Sigmoid colon (tissue), 7 donors: ENCODE measurements at regions of chr14 and their contacts with region 1.

Region 1: GRCh38 chr14:20613094-20614037 is 22.2 kb upstream of the RNASE12 start:
- DNase-seq: peak; percentile 93
- H3K4me3 ChIP-seq: peak overlapping the region; percentile 38 to 56 (median 52)
- H3K27ac ChIP-seq: peak overlapping the region; percentile 73 to 86 (median 78)
- H3K4me1 ChIP-seq: peaks cover 3 to 21% (median 13%) of the 10 kb centered on the region in 4 donors
- H3K27me3 ChIP-seq: no peaks in the 10 kb centered on the region
- CTCF ChIP-seq: peak; percentile 77 to 98 (median 94)
- EP300 ChIP-seq: no peak
- POLR2A ChIP-seq: no peak

Region 2: GRCh38 chr14:20327005-20327869 is 286.1 kb before region 1 on chr14:
- intact Hi-C with region 1: loop called (anchors 2 kb)
- DNase-seq: no peak
- H3K4me3 ChIP-seq: no peak overlapping the region
- H3K27ac ChIP-seq: peak overlapping the region; percentile 15 to 62 (median 40)
- H3K4me1 ChIP-seq: peaks cover 0 to 29% (median 15%) of the 10 kb centered on the region in 4 donors
- H3K27me3 ChIP-seq: no peaks in the 10 kb centered on the region
- CTCF ChIP-seq: peak; percentile 31 to 71 (median 55)
- EP300 ChIP-seq: no peak
- POLR2A ChIP-seq: no peak

Region 3: GRCh38 chr14:20413045-20413799 is 200.1 kb before region 1 on chr14 and contains the start of gene TEP1:
- intact Hi-C with region 1: loop called (anchors 2 kb)
- DNase-seq: peak; percentile 95
- H3K4me3 ChIP-seq: peak within 1 kb of the TSS; percentile 64 to 87 (median 77)
- H3K27ac ChIP-seq: peak within 1 kb of the TSS; percentile 94 to 96 (median 96)
- H3K4me1 ChIP-seq: peaks cover 0 to 19% (median 13%) of the 10 kb centered on the region in 4 donors
- H3K27me3 ChIP-seq: no peaks in the 10 kb centered on the region
- CTCF ChIP-seq: no peak
- EP300 ChIP-seq: no peak
- POLR2A ChIP-seq: peak; percentile 50 to 64
- total RNA-seq, gene TEP1: 12.7 to 42.7 (median 19.6) TPM

Region 4: DNA sequence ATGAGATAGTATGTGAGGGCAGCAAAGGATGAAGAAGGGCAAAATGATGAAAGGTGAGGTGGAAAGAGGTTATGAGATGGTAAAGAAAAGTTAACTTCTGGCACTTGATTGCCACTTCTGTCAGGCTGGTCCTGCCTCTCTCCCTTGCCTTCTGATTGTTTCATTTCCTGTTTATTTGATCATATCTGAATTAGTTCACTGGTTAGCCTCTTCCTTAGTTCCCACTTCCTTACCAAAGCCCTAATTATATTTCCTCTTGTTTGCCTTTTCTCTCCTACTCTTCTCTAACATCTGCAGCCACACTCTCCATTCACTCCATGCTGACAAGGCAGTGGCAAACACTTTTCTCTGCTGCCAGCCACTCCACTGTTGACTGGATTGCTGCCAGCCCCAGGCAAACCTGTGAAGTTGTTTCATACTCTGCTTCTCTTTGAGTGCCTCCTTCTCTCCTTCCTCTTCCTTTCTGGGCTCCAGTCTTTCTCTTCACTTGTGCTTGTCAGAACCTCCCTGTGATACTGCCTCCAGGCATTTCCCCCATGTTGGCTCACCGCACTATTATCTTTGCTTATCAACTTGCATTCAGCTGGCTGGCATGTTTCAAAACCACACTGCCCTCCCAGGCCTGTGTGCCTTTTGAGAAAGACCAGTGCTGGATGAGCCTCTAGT is 136.0 kb before region 1 on chr14:
- intact Hi-C with region 1: no loop called
- DNase-seq: no peak
- H3K4me3 ChIP-seq: no peak overlapping the region
- H3K27ac ChIP-seq: peak overlapping the region in 3 of 4 donors; percentile 29 to 44 (median 32)
- H3K4me1 ChIP-seq: peaks cover 0 to 6% (median 0%) of the 10 kb centered on the region in 4 donors
- H3K27me3 ChIP-seq: no peaks in the 10 kb centered on the region
- CTCF ChIP-seq: no peak
- EP300 ChIP-seq: no peak
- POLR2A ChIP-seq: no peak

Region 5: DNA sequence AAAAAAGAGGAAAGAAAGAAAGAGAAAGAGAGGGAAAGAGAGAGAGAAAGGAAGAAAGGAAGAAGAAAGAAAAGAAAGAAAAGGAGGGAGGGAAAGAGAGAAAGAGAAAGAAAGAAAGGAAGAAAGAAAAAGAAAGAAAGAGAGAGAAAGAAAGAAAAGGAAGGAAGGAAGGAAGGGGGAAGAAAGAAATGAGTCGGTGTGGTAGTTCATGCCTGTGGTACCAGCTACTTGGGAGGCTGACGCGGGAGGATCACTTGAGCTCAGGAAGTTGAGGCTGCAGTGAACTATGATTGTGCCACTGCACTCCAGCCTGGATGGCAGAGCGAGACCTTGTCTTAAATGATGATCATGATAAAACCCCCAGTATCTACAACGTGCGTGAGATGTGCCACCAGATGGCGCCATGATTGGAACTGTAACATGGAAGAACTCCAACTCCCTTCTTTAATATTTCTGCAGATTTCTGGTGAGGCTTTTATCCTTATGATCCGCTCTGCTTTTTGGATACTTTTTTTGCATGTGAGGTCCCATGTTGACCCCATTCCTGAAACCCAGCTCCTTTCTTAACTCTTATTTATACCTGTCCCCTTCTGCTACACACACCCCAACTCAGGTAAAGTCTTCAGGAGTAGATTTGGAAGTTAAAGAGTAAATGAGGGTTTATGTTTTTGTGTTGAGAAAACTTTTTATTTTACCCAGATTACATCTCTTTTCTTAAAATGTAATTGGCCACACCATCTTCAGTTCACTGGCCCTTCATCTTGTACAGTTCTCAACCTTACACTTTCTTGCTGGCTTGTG is 82.4 kb before region 1 on chr14:
- intact Hi-C with region 1: loop called (anchors 2 kb)
- DNase-seq: peak; percentile 82
- H3K4me3 ChIP-seq: no peak overlapping the region
- H3K27ac ChIP-seq: no peak overlapping the region
- H3K4me1 ChIP-seq: no peaks in the 10 kb centered on the region
- H3K27me3 ChIP-seq: no peaks in the 10 kb centered on the region
- CTCF ChIP-seq: peak; percentile 9 to 69 (median 34)
- EP300 ChIP-seq: no peak
- POLR2A ChIP-seq: no peak

Region 6: DNA sequence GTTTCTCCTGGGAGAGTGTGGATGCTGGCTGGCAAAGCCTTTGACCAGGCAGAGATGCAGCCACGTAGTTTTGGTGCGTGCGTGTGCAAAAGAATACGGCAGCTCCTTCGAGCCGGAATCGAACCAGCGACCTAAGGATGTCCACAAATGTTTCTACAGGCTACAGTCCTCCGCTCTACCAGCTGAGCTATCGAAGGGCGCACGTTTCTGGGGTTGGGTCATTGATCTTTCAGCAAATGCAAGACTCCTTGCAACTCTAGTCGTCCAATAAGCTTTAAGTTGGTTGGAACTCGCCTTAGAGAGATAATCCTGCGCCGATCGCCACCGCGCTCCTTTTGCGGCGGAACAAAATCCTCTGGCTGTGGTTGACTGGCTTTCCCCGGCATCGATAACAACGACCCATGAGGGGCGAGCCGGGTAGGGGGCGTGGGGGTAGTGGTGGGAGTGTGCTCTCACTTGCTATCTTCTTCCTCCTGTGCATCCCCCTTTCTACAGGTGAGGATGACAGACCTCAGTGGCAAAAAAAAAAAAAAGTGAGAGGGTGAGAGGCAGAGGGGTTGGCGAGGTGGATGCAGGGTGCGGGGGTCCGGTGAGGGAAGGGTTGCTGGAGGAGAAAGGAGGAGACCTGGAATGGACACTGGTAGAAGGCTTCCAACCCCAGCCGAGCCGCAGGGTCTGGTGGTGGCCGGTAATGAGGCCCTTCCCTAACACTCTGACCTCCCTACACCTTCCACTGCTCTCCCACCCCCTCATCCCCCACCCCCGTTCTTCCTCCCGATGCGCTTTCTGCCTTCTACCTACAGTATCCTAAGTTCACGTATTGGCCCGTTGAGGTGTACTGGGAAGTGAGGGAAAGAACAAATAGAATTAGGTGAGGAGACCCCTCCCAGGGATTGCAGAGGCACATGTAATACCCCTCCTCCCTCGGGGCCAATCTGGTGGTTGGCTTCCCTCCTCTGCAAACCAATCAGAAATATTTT is 39.9 kb after region 1 on chr14:
- intact Hi-C with region 1: no loop called
- DNase-seq: no peak
- H3K4me3 ChIP-seq: no peak overlapping the region
- H3K27ac ChIP-seq: no peak overlapping the region
- H3K4me1 ChIP-seq: peaks cover 0 to 8% (median 0%) of the 10 kb centered on the region in 4 donors
- H3K27me3 ChIP-seq: peaks cover 12 to 88% (median 56%) of the 10 kb centered on the region in 3 donors
- CTCF ChIP-seq: no peak
- EP300 ChIP-seq: no peak
- POLR2A ChIP-seq: no peak

Region 7: DNA sequence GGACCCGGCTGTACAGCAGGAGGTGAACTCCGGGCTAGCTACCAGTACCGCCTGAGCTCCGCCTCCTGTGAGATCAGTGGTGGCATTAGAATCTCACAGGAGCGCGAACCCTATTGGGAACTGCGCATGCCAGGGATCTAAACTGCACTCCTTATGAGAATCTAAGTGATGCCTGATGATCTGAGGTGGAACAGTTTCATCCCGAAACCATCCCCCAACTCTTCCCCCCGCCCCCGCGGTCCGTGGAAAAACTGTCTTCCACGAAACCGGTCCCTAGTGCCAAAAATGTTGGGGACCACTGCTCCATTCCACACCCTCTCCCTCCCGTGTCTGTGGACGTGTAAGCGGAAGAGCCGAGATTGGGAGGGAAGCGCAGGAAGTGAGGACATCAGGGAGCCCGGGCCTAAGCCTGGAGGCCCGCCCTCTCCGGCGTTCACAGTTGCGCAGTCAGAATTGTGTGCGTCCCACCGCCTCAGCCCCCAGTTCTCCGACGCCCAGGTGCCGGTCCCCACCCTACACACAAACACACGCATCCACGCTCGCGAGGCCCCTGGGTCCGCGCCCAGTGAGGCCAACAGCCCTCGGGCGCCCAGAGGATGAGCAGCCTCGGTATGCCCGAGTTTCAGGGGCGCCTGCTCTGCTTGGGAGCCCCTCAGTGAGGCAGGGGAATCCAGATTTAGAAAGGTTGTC is 69.2 kb after region 1 on chr14:
- intact Hi-C with region 1: loop called (anchors 1 kb)
- DNase-seq: peak; percentile 96
- H3K4me3 ChIP-seq: peak overlapping the region; percentile 77 to 93 (median 80)
- H3K27ac ChIP-seq: peak overlapping the region; percentile 99 to 100 (median 99)
- H3K4me1 ChIP-seq: peaks cover 4 to 41% (median 32%) of the 10 kb centered on the region in 4 donors
- H3K27me3 ChIP-seq: no peaks in the 10 kb centered on the region
- CTCF ChIP-seq: no peak
- EP300 ChIP-seq: no peak
- POLR2A ChIP-seq: peak; percentile 95

Region 8: DNA sequence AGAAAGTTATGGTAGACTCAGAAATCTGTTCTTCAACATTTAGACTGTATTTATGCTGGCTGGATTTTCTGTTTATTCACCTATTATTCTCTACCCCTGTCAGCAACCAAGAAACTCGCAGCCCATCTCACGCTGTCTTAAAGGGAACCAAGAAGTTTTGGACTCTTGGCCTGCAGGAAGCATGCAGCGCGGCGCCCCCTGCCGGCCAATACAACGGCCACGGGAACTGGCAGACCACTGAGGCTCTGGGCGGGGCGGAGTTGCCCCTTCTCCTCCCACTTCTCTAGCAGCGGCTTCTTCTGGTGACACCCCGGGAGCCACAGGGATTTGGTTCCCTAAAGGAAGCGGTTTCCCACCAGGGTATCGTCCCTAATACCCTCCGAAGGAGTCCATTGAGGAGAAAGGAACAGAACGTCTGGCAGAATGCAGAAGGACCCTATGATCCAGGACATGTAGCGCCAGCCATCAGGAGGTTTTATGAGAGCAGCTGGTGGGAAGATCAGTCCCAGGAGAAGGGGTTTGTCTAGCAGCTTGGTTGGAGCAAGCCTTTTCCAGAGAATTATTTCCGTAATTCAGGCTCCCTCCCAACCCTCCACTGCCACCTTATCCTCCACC is 320.9 kb after region 1 on chr14:
- intact Hi-C with region 1: no loop called
- DNase-seq: no peak
- H3K4me3 ChIP-seq: no peak overlapping the region
- H3K27ac ChIP-seq: no peak overlapping the region
- H3K4me1 ChIP-seq: no peaks in the 10 kb centered on the region
- H3K27me3 ChIP-seq: peaks cover 0 to 5% (median 0%) of the 10 kb centered on the region in 3 donors
- CTCF ChIP-seq: no peak
- EP300 ChIP-seq: no peak
- POLR2A ChIP-seq: no peak